Dendritic cell treated with granulocyte-macrophage colony-stimulating factor and Interleukin-4, amounts not matched to agents 40 ng/mL and 50 ng/mL, for 4 days (primary cell): ENCODE measurements at regions of chr10 and their contacts with region 1.

Region 1: GRCh38 chr10:22714479-22715289 is at the start of gene PIP4K2A:
- H3K4me3 Mint-ChIP-seq: peak within 1 kb of the TSS; percentile 91
- H3K27ac Mint-ChIP-seq: peak within 1 kb of the TSS; percentile 84
- H3K4me1 Mint-ChIP-seq: peaks cover 30% of the 10 kb centered on the region
- H3K27me3 Mint-ChIP-seq: peaks cover 6% of the 10 kb centered on the region

Region 2: DNA sequence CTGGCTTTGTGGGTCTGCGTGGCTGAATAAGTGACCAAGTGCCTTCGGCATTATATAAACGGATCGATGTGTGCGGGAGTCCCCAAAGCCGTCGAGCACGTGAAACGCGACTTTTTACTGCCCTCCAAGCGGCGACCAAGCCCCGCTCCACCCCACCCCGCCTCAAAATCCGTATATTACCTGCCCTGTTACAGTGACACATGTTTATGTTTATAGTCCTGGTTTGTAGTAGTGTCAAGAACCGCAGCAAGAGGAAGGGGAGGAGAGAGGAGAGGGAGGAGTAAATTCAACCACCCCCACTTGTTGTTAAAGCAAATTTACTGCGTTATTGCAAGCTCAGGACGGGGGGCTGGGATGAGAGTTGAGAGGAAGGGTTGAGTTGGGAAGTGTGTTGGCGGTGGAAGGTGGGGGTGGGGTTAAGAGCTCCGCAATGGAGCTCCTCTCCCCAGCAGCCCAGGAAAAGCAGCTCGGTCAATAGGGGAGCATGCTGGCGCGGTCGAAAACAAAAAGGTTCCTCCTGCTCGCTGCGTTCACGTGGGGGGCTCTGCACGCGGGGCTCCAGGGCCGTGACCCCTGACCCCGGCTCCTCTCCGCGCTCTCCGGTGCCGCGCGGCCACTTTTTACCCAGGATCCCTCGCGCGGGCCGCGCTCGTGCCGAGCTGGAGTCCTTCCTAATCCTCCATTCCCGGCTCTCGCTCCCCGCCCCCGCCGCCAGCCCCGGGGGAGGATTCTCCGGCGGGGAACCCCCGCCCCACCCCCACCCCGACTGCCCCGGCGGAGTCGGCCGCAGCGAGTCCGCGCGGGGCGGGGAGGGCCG is 1189.1 kb before region 1 on chr10 and contains the start of gene SKIDA1:
- intact Hi-C with region 1: loop called (anchors 10 kb)
- H3K4me3 Mint-ChIP-seq: peak within 1 kb of the TSS; percentile 88
- H3K27ac Mint-ChIP-seq: peak within 1 kb of the TSS; percentile 97
- H3K4me1 Mint-ChIP-seq: peaks cover 30% of the 10 kb centered on the region
- H3K27me3 Mint-ChIP-seq: peaks cover 10% of the 10 kb centered on the region

Region 3: GRCh38 chr10:22003079-22003913 is 711.4 kb before region 1 on chr10 and contains the start of gene DNAJC1:
- intact Hi-C with region 1: loop called (anchors 10 kb)
- H3K4me3 Mint-ChIP-seq: peak within 1 kb of the TSS; percentile 90
- H3K27ac Mint-ChIP-seq: peak within 1 kb of the TSS; percentile 87
- H3K4me1 Mint-ChIP-seq: peaks cover 23% of the 10 kb centered on the region
- H3K27me3 Mint-ChIP-seq: no peaks in the 10 kb centered on the region

Region 4: DNA sequence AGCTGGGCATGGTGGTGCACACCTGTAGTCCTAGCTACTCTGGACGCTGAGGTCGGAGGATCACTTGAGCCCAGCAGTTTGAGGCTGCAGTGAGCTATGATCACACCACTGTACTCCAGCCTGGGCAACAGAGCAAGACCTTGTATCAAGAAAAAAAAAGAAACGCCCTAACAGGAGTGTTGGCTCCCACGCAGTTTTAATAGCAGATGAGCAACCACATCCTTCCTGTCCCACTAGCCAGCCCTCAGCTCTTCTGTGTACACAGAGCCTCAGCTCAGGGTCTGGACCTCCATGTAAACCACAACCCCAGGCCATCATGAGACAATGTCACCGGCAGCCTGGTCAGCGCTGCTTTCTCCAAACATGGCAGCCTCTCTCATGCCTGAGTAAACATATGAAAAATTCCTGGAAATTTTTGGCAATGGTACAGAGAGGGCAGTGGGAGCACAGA is 108.5 kb before region 1 on chr10:
- intact Hi-C with region 1: loop called (anchors 5 kb)
- H3K4me3 Mint-ChIP-seq: peak overlapping the region; percentile 40
- H3K27ac Mint-ChIP-seq: peak overlapping the region; percentile 92
- H3K4me1 Mint-ChIP-seq: peaks cover 57% of the 10 kb centered on the region
- H3K27me3 Mint-ChIP-seq: no peaks in the 10 kb centered on the region

Region 5: DNA sequence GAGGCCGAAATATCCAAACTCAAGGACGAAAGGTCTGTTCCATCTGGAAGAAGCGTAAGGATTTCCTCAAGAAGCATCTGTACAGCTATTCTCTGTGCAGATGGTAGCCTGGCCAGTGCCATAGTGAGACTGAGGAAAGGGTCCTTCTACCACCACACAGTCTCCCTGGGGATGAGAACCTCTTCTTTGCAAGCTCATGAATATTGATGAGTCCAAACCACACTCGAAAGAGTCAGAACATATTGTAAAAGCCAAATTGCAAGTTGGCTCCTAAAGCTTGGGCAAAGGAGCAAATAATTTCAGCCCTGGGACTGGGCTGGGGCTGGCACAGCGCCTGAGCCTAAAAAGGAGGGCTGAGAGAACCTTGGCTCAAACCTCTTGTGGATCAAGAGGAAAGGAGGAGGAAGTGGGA is 65.8 kb after region 1 on chr10:
- intact Hi-C with region 1: no loop called
- H3K4me3 Mint-ChIP-seq: no peak overlapping the region
- H3K27ac Mint-ChIP-seq: no peak overlapping the region
- H3K4me1 Mint-ChIP-seq: no peaks in the 10 kb centered on the region
- H3K27me3 Mint-ChIP-seq: no peaks in the 10 kb centered on the region